ACHN (cell line): ENCODE measurements at regions of chr7 and their contacts with region 1.

Region 1: DNA sequence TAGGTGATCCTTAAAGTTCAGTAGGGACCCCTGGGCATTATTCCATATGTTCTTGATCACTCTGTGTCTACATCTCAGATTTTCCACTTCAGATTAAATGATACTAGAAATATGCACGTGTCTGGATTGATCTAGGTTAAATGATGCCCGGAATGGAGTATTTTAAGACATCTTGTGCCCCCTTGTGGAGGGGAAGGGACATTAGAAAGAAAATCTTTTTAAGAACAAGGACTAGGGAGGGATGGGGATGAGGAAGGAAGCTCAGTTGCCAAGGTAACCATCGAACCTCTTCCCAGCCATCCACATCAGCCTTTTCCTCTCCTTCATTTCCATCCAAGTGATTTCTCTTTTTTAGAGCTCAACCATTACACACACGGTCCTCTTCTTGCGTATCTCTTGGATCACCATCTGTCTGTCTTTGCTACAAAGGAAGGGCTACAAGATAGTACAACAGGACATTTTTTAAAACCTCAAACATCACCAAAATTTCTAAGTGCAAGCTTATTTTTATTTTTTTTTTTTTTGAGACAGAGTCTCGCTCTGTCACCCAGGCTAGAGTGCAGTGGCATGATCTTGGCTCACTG is 40.5 kb downstream of the PRSS2 start:
- DNase-seq: peak; percentile 59

Region 2: GRCh38 chr7:142632291-142633134 is 178.7 kb before region 1 on chr7:
- in situ Hi-C with region 1: loop called (anchors 25 kb)
- DNase-seq: peak; percentile 83

Region 3: DNA sequence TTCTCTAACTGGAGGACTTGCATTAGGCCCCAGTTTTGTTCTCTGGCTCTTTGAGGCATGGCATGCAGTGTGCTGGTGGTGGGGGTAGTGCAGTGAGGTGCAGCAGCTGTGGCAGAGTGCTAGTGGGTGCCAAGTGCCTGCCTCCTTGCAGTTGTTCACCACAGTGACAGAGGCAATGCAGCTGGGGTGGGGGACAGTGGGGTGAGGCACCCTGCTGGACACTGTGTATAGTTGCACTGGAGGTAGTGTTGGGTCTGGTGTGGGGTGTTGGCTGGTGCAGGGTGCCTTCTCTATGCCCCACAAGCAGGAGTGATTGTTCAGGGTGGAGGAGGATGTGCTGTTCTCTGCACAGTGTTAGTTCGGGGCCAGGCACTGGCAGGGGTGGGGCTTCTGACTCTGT is 172.6 kb after region 1 on chr7:
- in situ Hi-C with region 1: no loop called
- DNase-seq: no peak